Mammary epithelial cell (primary cell): ENCODE measurements at regions of chr1 and their contacts with region 1.

Region 1: GRCh38 chr1:83574791-83575190 is 424.1 kb downstream of the TTLL7 start:
- DNase-seq: no peak
- H3K4me3 ChIP-seq: no peak overlapping the region
- H3K27ac ChIP-seq: no peak overlapping the region
- H3K4me1 ChIP-seq: no peaks in the 10 kb centered on the region
- H3K27me3 ChIP-seq: no peaks in the 10 kb centered on the region
- CTCF ChIP-seq: no peak

Region 2: GRCh38 chr1:83531521-83532309 is 43.1 kb before region 1 on chr1:
- CTCF ChIA-PET with region 1: no interaction called
- dilution Hi-C with region 1: loop called (anchors 5 kb)
- in situ Hi-C with region 1: no loop called
- intact Hi-C with region 1: no loop called
- DNase-seq: no peak
- H3K4me3 ChIP-seq: no peak overlapping the region
- H3K27ac ChIP-seq: no peak overlapping the region
- H3K4me1 ChIP-seq: no peaks in the 10 kb centered on the region
- H3K27me3 ChIP-seq: no peaks in the 10 kb centered on the region
- CTCF ChIP-seq: no peak

Region 3: DNA sequence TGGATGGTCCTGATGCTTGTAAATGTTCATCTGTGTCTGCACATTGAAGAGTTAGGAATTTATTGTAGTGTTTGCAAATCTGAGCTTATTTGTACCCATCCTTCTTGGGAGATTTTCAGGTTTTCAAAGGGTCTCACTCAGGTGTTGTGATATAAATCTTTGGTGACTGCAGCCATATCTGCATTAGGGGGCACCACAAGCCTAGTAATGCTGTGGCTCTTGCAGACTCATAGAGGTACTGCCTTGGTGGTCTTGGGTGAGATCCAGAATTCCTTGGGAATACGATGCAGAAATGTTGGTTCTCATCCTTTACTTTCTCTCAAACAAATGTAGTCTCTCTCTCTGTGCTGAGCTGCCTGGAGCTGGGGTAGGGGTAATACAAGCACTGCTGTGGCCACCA is 18.3 kb after region 1 on chr1:
- CTCF ChIA-PET with region 1: no interaction called
- dilution Hi-C with region 1: no loop called
- in situ Hi-C with region 1: no loop called
- intact Hi-C with region 1: no loop called
- DNase-seq: no peak
- H3K4me3 ChIP-seq: no peak overlapping the region
- H3K27ac ChIP-seq: no peak overlapping the region
- H3K4me1 ChIP-seq: no peaks in the 10 kb centered on the region
- H3K27me3 ChIP-seq: no peaks in the 10 kb centered on the region
- CTCF ChIP-seq: no peak